ENCODE measurements at regions of chr17 and their contacts with region 1.

Region 1: GRCh38 chr17:7589204-7589868 is 558 bp downstream of the SOX15 start:
- DNase-seq: peak; percentile 83 to 92 (median 90)
- H3K4me3 ChIP-seq: peak overlapping the region; percentile 52 to 89 (median 78)
- H3K27ac ChIP-seq: peak overlapping the region; percentile 12 to 94 (median 87)
- H3K27me3 ChIP-seq: no peaks in the 10 kb centered on the region
- CTCF ChIP-seq: peak; percentile 75 to 97 (median 93)

Region 2: GRCh38 chr17:7083592-7083991 is 505.7 kb before region 1 on chr17:
- intact Hi-C with region 1: no loop called
- DNase-seq: no peak
- H3K4me3 ChIP-seq: no peak overlapping the region
- H3K27ac ChIP-seq: no peak overlapping the region
- H3K27me3 ChIP-seq: peaks cover 0 to 4% (median 0%) of the 10 kb centered on the region in 45 donors
- CTCF ChIP-seq: no peak

Region 3: GRCh38 chr17:7486185-7486584 is 103.2 kb before region 1 on chr17:
- intact Hi-C with region 1: no loop called
- DNase-seq: no peak
- H3K4me3 ChIP-seq: peak overlapping the region in 54 of 59 donors; percentile 1 to 98 (median 84)
- H3K27ac ChIP-seq: peak overlapping the region in 14 of 59 donors; percentile 2 to 100 (median 28)
- H3K27me3 ChIP-seq: no peaks in the 10 kb centered on the region
- CTCF ChIP-seq: no peak

Region 4: GRCh38 chr17:7548585-7549400 is 40.5 kb before region 1 on chr17 and contains the start of gene TNFSF12:
- intact Hi-C with region 1: no loop called
- DNase-seq: peak; percentile 36 to 66 (median 59)
- H3K4me3 ChIP-seq: peak within 1 kb of the TSS; percentile 50 to 96 (median 79)
- H3K27ac ChIP-seq: peak within 1 kb of the TSS; percentile 62 to 98 (median 94)
- H3K27me3 ChIP-seq: no peaks in the 10 kb centered on the region
- CTCF ChIP-seq: peak in 18 of 56 donors; percentile 5 to 38 (median 16)
- total RNA-seq, gene TNFSF12: 25.3 to 97.2 (median 50.2) TPM

Region 5: GRCh38 chr17:7614422-7615264 is 25.3 kb after region 1 on chr17 and contains the start of gene FXR2:
- intact Hi-C with region 1: loop called in 1 of 2 experiments (anchors 2 kb)
- DNase-seq: peak; percentile 99 to 100 (median 100)
- H3K4me3 ChIP-seq: peak within 1 kb of the TSS; percentile 70 to 97 (median 91)
- H3K27ac ChIP-seq: peak within 1 kb of the TSS; percentile 60 to 98 (median 93)
- H3K27me3 ChIP-seq: no peaks in the 10 kb centered on the region
- CTCF ChIP-seq: peak in 55 of 56 donors; percentile 31 to 86 (median 64)
- total RNA-seq, gene FXR2: 53.1 to 114 (median 73.7) TPM

Region 6: DNA sequence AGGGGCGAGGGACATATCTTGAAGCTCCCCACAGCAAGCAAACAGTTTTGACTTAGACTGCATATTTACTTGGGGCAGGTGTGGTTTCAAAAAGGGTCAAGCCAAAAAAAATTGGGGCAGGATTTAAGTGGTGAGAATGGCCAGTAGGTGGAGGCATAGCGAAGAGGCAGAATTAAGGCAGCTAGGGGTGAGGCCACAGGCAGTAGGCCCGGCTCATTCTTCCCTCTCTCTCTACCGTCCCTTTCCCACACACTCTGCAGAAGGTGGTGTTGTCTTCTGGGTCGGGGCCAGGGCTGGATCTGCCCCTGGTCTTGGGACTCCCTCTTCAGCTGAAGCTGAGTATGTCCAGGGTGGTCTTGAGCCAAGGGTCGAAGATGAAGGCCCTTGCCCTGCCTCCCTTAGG is 43.2 kb after region 1 on chr17:
- intact Hi-C with region 1: loop called in 1 of 2 experiments (anchors 1 kb)
- DNase-seq: no peak
- H3K4me3 ChIP-seq: no peak overlapping the region
- H3K27ac ChIP-seq: peak overlapping the region in 15 of 59 donors; percentile 6 to 63 (median 41)
- H3K27me3 ChIP-seq: no peaks in the 10 kb centered on the region
- CTCF ChIP-seq: peak in 46 of 56 donors; percentile 16 to 62 (median 38)

Region 7: DNA sequence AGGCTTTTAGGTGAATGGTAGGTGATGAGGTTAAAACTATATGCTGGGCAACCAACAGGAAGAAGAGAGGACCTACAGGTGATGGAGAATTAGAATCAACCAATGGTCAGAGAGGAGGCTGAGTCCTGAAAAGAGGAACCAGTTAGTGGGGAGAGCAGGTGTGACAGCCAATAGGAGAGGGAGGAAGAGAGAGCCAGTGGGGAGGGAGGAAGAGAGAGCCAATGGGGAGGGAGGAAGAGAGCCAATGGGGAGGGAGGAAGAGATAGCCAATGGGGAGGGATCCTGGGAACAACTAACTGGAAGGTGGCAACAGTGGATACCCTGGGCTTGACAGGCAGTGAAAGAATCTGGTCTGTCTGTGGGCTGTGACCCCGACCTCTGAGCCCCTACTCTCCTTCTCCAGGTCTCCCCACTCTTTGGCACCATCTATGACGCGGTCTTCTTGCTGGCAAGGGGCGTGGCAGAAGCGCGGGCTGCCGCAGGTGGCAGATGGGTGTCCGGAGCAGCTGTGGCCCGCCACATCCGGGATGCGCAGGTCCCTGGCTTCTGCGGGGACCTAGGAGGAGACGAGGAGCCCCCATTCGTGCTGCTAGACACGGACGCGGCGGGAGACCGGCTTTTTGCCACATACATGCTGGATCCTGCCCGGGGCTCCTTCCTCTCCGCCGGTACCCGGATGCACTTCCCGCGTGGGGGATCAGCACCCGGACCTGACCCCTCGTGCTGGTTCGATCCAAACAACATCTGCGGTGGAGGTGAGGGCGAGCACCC is 416.8 kb after region 1 on chr17:
- intact Hi-C with region 1: no loop called
- DNase-seq: no peak
- H3K4me3 ChIP-seq: no peak overlapping the region
- H3K27ac ChIP-seq: no peak overlapping the region
- H3K27me3 ChIP-seq: peaks cover 0 to 65% (median 29%) of the 10 kb centered on the region in 45 donors
- CTCF ChIP-seq: no peak

Measured in dorsolateral prefrontal cortex (tissue), 120 donors.